Astrocyte of the cerebellum (primary cell): ENCODE measurements at regions of chr6 and their contacts with region 1.

Region 1: GRCh38 chr6:34143884-34144580 is 1.9 kb downstream of the GRM4 start:
- DNase-seq: no peak
- H3K4me3 ChIP-seq: peak overlapping the region; percentile 27
- CTCF ChIP-seq: peak; percentile 12

Region 2: GRCh38 chr6:33744001-33744848 is 399.8 kb before region 1 on chr6:
- in situ Hi-C with region 1: loop called (anchors 5 kb)
- DNase-seq: peak; percentile 49
- H3K4me3 ChIP-seq: no peak overlapping the region
- CTCF ChIP-seq: peak; percentile 93

Region 3: GRCh38 chr6:33768644-33769120 is 375.4 kb before region 1 on chr6:
- in situ Hi-C with region 1: loop called (anchors 5 kb)
- DNase-seq: peak; percentile 49
- H3K4me3 ChIP-seq: no peak overlapping the region
- CTCF ChIP-seq: peak; percentile 85

Region 4: DNA sequence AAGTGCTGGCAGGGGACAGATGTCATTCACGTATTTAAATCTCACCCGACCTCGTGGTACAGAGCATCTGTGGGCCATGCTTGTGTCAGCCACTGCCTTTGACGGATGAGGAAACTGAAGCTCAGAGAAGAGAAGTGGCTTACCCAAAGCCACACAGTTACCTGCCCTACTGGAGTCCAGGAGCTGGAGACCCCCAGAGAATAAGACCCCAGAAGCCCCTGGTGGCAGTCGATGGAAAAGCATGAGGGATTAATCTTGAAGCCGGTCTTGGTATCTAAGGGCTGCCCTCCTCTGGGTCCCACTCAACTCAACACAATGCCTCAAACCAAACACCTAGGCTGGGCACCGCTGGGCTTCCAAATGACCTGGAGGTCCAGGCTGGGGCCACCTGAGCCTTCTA is 81.2 kb before region 1 on chr6:
- in situ Hi-C with region 1: loop called (anchors 5 kb)
- DNase-seq: no peak
- H3K4me3 ChIP-seq: no peak overlapping the region
- CTCF ChIP-seq: peak; percentile 29

Region 5: DNA sequence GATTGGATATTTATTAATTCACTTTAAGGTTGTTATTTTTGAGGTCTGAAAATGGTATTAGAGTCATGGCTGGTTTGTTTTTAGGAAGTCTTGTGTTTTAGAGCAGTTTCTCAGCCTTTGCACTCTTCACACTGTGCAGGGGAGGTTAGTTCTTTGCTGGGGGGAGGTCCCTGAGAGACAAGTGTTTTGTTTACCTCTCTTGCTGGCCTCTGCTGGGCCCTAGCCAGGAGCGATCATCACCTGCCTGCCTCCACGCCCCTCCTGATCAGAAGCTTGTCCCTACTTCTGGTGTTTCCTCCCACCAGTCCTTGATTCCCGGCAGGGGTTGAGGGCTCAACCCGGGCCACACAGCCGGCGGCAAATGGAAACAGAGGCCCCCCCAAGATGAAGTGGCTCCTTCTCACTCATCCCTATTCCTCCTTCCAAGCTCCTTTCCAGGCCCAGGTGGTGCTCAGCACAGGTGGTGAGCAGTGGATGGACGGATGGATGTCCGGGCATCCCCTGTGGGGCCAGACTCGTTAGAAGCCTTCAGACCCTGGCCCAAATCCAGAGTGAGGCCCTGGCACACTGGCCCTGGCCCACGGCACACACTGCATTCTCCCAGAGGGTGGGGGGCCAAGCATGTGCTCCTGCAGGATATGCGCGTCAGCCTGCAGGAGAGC is 49.4 kb before region 1 on chr6:
- in situ Hi-C with region 1: loop called (anchors 5 kb)
- DNase-seq: no peak
- H3K4me3 ChIP-seq: no peak overlapping the region
- CTCF ChIP-seq: no peak